ENCODE measurements at regions of chr1 and their contacts with region 1.

Region 1: DNA sequence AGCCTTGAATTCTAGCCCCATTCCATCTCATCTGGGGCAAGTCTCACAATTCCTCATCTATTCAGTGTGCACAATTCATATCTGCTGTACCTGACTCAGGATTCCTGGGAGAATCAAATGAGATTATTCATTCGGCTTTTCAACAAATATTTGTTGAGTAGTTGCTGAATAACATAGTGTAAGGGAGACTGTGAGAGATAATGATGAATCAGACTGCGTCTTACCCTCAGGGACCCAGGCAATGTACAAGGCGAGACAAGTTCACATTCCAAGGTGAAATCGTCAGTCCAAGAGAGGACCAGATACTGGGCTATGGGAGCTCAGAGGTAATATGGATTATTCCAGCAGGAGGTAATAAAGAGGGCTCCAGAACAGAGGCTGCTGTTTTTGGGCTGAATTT is 67.8 kb upstream of the SMYD2 start:
- DNase-seq: no peak
- H3K4me3 ChIP-seq: no peak overlapping the region
- H3K27ac ChIP-seq: no peak overlapping the region
- H3K4me1 ChIP-seq: peaks cover 7% of the 10 kb centered on the region
- H3K27me3 ChIP-seq: peaks cover 6 to 16% of the 10 kb centered on the region in 2 experiments
- CTCF ChIP-seq: no peak
- POLR2A ChIP-seq: no peak

Region 2: DNA sequence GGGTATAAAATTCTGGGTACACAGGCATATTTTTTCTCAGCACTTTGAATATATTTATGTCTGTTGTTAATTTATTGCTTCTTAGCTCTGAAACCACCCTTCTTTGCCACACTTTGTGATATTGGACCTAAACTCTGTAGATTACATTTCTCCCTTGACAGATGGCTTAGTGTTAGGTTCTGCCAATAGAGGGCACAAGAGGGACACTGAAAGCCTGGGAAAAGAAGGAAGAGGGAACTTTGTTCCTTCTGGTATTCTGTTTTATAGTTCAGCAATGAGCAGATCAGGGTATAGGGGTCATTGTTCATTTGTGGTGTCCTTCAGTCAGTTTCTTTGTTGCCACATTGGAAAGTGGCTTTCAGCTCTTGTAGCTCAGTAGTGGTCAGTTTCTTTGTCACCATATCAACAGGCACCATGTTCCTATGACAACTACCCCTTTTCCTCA is 648.9 kb before region 1 on chr1:
- CTCF ChIA-PET with region 1: no interaction called
- POLR2A ChIA-PET with region 1: no interaction called
- dilution Hi-C with region 1: no loop called
- intact Hi-C with region 1: loop called (anchors 5 kb)
- DNase-seq: peak; percentile 51
- H3K4me3 ChIP-seq: no peak overlapping the region
- H3K27ac ChIP-seq: no peak overlapping the region
- H3K4me1 ChIP-seq: no peaks in the 10 kb centered on the region
- H3K27me3 ChIP-seq: no peaks in the 10 kb centered on the region
- CTCF ChIP-seq: peak; percentile 40 to 52
- POLR2A ChIP-seq: no peak

Region 3: DNA sequence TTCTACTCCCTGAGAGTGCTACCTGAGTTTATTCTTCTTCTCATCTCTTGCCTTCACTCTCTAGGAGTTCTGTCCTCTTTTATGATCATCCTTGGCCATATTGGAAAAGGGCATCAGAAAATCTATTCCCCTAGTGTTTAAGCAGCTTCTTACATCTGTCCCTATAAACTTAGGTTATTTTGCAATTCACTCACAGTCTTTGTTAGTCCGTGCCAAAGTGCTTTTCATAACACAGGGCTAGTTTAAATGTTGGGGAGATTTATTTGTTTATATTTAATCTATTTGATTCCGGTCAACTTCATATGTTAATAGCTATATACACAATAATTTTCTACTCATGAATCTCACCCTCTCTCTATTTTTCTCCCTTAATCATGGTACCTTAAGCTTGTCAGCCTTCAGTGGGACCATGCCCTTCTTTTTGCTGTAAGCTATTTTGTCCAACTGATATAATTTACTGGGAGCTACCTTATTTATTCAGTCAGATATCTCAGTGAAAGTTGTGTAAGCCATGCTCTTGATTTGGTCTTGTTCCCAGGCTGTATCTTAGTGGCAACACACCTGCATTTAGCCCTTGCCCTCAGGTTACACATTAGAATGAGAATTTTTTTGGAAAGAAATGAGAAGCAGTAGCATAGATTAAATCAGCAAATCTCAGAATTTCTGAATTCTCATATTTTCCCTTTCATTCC is 38.5 kb before region 1 on chr1:
- CTCF ChIA-PET with region 1: no interaction called
- POLR2A ChIA-PET with region 1: no interaction called
- dilution Hi-C with region 1: no loop called
- intact Hi-C with region 1: no loop called
- DNase-seq: no peak
- H3K4me3 ChIP-seq: no peak overlapping the region
- H3K27ac ChIP-seq: no peak overlapping the region
- H3K4me1 ChIP-seq: no peaks in the 10 kb centered on the region
- H3K27me3 ChIP-seq: peaks cover 4 to 7% of the 10 kb centered on the region in 2 experiments
- CTCF ChIP-seq: no peak
- POLR2A ChIP-seq: no peak

Region 4: DNA sequence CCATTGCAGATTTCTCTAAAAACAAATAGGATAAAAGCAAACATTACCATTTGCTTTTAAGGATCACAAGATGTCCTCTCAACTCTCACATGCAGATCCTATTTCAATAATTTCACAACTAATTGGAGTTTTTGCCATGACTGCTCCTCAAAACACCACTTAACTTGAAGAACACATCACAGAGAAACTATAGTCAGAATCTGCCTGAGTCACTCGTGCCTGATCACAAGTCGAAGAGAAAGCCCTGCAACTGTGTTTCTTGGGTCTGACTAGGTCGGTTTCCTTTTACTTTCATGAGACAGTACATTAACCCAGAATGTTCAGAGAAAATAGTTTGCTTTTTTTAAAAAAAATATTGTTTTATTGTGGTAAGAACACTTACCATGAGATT is 21.5 kb after region 1 on chr1:
- CTCF ChIA-PET with region 1: interaction called, 10 read pairs
- POLR2A ChIA-PET with region 1: no interaction called
- dilution Hi-C with region 1: no loop called
- intact Hi-C with region 1: no loop called
- DNase-seq: no peak
- H3K4me3 ChIP-seq: no peak overlapping the region
- H3K27ac ChIP-seq: no peak overlapping the region
- H3K4me1 ChIP-seq: no peaks in the 10 kb centered on the region
- H3K27me3 ChIP-seq: peaks cover 4% of the 10 kb centered on the region in 2 experiments
- CTCF ChIP-seq: no peak
- POLR2A ChIP-seq: no peak

Region 5: GRCh38 chr1:214296860-214297745 is 84.0 kb after region 1 on chr1:
- CTCF ChIA-PET with region 1: interaction called, 13 read pairs
- POLR2A ChIA-PET with region 1: no interaction called
- dilution Hi-C with region 1: no loop called
- intact Hi-C with region 1: no loop called
- DNase-seq: peak; percentile 30
- H3K4me3 ChIP-seq: no peak overlapping the region
- H3K27ac ChIP-seq: no peak overlapping the region
- H3K4me1 ChIP-seq: peaks cover 31% of the 10 kb centered on the region
- H3K27me3 ChIP-seq: no peaks in the 10 kb centered on the region
- CTCF ChIP-seq: no peak
- POLR2A ChIP-seq: no peak

Region 6: GRCh38 chr1:214632091-214632490 is 419.0 kb after region 1 on chr1:
- CTCF ChIA-PET with region 1: interaction called, 16 read pairs
- POLR2A ChIA-PET with region 1: no interaction called
- dilution Hi-C with region 1: no loop called
- intact Hi-C with region 1: loop called (anchors 1 kb)
- DNase-seq: no peak
- H3K4me3 ChIP-seq: no peak overlapping the region
- H3K27ac ChIP-seq: no peak overlapping the region
- H3K4me1 ChIP-seq: no peaks in the 10 kb centered on the region
- H3K27me3 ChIP-seq: no peaks in the 10 kb centered on the region
- CTCF ChIP-seq: no peak
- POLR2A ChIP-seq: no peak